ENCODE measurements at regions of chr16 and their contacts with region 1.

Region 1: DNA sequence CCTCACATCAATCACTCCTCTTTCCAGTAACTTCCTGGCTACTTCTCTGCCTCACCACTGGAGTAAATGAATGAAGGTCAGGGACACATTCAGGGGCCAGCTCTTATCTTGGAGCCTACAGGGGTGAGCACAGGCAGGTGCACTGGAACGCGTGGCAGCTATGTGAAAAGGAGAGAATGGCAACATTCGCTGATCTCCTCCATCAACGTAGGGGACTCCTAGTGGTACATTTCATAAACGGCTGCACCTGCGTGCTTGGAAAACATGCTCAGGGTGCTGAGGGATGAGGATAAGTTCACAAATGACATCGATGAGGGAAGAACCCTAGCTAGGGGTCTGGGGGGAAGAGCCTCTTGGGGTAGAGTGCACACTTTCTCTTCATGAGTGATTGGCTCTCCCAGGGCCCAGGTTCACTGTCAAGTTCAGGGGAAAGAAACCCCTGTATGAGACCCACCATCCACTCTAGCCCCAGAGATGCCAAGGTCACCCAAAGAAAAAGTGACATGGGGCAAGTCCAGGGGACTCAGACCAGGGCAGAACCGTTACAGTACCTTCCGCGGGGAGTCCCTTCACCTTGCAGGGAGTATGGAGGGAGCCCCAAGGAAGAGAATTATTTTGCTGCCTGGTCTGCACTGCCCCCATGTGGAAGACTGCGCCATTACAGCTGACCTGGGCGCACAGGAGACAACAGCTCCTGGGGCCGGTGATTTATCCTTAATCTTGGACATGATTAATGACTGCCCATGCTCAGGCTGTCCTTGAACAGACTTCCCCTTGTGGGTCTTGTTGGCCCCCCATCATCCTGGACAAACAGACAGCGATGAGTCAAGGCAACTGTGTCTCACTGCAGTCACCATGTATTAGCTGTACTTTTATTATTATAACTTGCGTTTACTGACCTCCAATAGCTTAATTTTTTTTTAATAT is 30.1 kb downstream of the VAC14 start:
- DNase-seq: peak; percentile 81 to 84 (median 81)
- ATAC-seq: peak; percentile 96
- H3K4me3 ChIP-seq: no peak overlapping the region
- H3K27ac ChIP-seq: no peak overlapping the region
- H3K4me1 ChIP-seq: peaks cover 0 to 2% of the 10 kb centered on the region in 2 experiments; a peak in 3 of 5 replicates
- H3K27me3 ChIP-seq: no peaks in the 10 kb centered on the region
- CTCF ChIP-seq: peak; percentile 87 to 96 (median 95)
- EP300 ChIP-seq: peak; percentile 81
- POLR2A ChIP-seq: no peak
- RAD21 ChIP-seq: peak; percentile 77 to 86

Region 2: DNA sequence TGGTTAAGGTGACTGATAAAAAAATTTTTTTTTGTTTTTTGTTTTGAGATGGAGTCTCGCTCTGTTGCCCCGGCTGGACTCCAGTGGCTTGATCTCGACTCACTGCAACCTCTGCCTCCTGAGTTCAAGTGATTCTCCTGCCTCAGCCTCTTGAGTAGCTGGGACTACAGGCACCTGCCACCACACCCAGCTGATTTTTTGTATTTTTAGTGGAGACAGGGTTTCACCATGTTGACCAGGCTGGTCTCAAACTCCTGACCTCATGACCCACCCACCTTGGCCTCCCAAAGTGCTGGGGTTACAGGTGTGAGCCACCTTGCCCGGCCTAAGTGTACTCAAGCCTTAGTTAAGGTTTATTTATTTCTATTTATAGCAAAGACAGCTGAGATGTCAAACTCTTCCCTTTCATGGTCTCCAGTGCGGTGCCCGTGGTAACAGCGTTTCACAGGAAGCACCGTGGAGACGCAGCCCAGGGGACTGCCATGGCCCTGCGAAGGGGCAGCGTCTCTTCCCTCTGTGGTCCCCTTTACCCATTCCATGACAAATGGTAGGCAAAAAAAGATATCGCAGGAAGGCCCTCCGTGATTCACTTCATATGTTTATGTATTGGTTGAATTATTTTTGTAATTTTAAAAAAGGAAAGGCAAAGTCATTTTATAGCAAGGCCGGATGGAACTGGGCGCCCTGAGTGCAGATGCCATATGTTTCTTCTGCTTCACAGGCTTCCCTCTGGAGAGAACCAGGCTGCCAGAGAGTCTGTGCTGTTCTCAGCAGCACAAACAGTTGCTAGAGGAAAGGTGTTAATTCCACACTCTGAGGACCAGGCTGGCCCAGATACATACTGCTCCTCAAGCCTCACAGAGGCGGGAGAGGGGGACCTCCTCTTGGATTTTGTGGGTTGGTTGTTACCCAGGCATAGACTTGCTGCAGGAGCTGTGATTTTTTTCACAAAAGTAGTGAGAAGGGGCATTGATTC is 395.0 kb before region 1 on chr16:
- CTCF ChIA-PET with region 1: no interaction called
- POLR2A ChIA-PET with region 1: interaction called, 5 read pairs
- in situ Hi-C with region 1: no loop called
- intact Hi-C with region 1: loop called (anchors 10 kb)
- DNase-seq: no peak
- ATAC-seq: peak; percentile 7; the same call in 1 of the 3 replicates
- H3K4me3 ChIP-seq: no peak overlapping the region
- H3K27ac ChIP-seq: no peak overlapping the region
- H3K4me1 ChIP-seq: peaks cover 0 to 9% of the 10 kb centered on the region in 2 experiments; a peak in 2 of 5 replicates
- H3K27me3 ChIP-seq: no peaks in the 10 kb centered on the region
- CTCF ChIP-seq: no peak
- EP300 ChIP-seq: no peak
- POLR2A ChIP-seq: peak; percentile 82
- RAD21 ChIP-seq: no peak

Region 3: GRCh38 chr16:70653809-70654771 is 116.8 kb before region 1 on chr16:
- CTCF ChIA-PET with region 1: no interaction called
- POLR2A ChIA-PET with region 1: no interaction called
- in situ Hi-C with region 1: no loop called
- intact Hi-C with region 1: loop called (anchors 2 kb)
- DNase-seq: peak; percentile 75 to 91 (median 81)
- ATAC-seq: peak; percentile 93
- H3K4me3 ChIP-seq: peak overlapping the region; percentile 7
- H3K27ac ChIP-seq: peak overlapping the region; percentile 69; the same call in 2 of the 3 replicates
- H3K4me1 ChIP-seq: peaks cover 6 to 24% of the 10 kb centered on the region in 2 experiments
- H3K27me3 ChIP-seq: peaks cover 0 to 4% of the 10 kb centered on the region in 2 experiments; a peak in 1 of 5 replicates
- CTCF ChIP-seq: peak; percentile 82 to 97 (median 93)
- EP300 ChIP-seq: peak; percentile 36
- POLR2A ChIP-seq: no peak
- RAD21 ChIP-seq: peak; percentile 95 to 96

Region 4: DNA sequence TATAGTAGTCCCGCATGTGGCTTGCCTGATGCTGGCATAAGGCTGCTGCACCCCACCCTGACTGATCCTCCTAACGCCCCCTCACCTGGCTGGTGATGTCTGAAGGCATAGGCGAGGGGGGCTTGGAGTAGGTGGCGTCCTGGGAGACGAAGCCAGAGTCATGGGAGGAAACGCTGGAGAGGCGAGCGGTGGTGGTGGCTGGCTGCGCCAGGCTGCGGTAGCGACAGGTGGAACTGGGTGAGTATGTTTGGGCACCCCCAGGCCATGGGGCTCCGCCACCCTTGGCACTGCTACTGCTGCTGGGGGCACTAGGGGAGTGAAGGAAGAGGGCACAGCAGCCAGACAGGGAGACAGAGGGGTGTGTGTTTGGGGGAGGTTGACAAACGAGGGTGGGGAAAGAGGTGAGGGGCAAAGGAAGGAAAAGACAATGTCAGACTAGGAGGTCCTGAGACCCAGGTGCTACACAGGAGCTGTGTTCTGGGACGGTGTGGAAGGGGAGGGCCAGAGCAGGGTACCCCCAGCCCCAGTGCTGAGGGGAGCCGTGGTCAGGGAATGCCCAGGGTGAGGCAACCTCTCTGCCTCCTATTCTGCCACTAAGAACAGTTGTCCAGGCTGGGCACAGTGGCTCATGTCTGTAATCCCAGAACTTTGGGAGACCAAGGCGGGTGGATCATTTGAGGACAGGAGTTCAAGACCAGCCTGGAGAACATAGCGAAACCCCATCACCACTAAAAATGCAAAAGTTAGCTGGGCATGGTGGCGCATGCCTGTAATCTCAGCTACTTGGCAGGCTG is 96.5 kb before region 1 on chr16:
- CTCF ChIA-PET with region 1: interaction called, 7 read pairs
- POLR2A ChIA-PET with region 1: no interaction called
- in situ Hi-C with region 1: no loop called
- intact Hi-C with region 1: loop called (anchors 5 kb)
- DNase-seq: no peak
- ATAC-seq: no peak
- H3K4me3 ChIP-seq: no peak overlapping the region
- H3K27ac ChIP-seq: no peak overlapping the region
- H3K4me1 ChIP-seq: peaks cover 0 to 4% of the 10 kb centered on the region in 2 experiments; a peak in 1 of 5 replicates
- H3K27me3 ChIP-seq: no peaks in the 10 kb centered on the region
- CTCF ChIP-seq: no peak
- EP300 ChIP-seq: no peak
- POLR2A ChIP-seq: no peak
- RAD21 ChIP-seq: no peak

Region 5: GRCh38 chr16:70685938-70686375 is 84.9 kb before region 1 on chr16 and contains the start of gene MTSS2:
- CTCF ChIA-PET with region 1: interaction called, 4 read pairs
- POLR2A ChIA-PET with region 1: interaction called, 3 read pairs
- in situ Hi-C with region 1: no loop called
- intact Hi-C with region 1: loop called (anchors 5 kb)
- DNase-seq: peak; percentile 91 to 95 (median 94)
- ATAC-seq: peak; percentile 85
- H3K4me3 ChIP-seq: peak within 1 kb of the TSS; percentile 86
- H3K27ac ChIP-seq: peak within 1 kb of the TSS; percentile 82
- H3K4me1 ChIP-seq: peaks cover 15 to 86% of the 10 kb centered on the region in 2 experiments
- H3K27me3 ChIP-seq: no peaks in the 10 kb centered on the region
- CTCF ChIP-seq: no peak
- EP300 ChIP-seq: no peak
- POLR2A ChIP-seq: no peak
- RAD21 ChIP-seq: no peak
- polyA plus RNA-seq, gene MTSS2: 0.11 to 0.32 TPM

Region 6: GRCh38 chr16:70700101-70701020 is 70.5 kb before region 1 on chr16:
- CTCF ChIA-PET with region 1: no interaction called
- POLR2A ChIA-PET with region 1: no interaction called
- in situ Hi-C with region 1: no loop called
- intact Hi-C with region 1: no loop called
- DNase-seq: no peak
- ATAC-seq: no peak
- H3K4me3 ChIP-seq: no peak overlapping the region
- H3K27ac ChIP-seq: no peak overlapping the region
- H3K4me1 ChIP-seq: peaks cover 16 to 82% of the 10 kb centered on the region in 2 experiments
- H3K27me3 ChIP-seq: no peaks in the 10 kb centered on the region
- CTCF ChIP-seq: no peak
- EP300 ChIP-seq: no peak
- POLR2A ChIP-seq: no peak
- RAD21 ChIP-seq: no peak